Esophagus muscularis mucosa (tissue), 4 donors: ENCODE measurements at regions of chr9 and their contacts with region 1.

Region 1: GRCh38 chr9:114653556-114654159 is 3.9 kb downstream of the TEX53 start:
- DNase-seq: peak; percentile 93
- H3K4me3 ChIP-seq: no peak overlapping the region
- H3K27ac ChIP-seq: peak overlapping the region in 3 of 4 donors; percentile 30 to 46 (median 36)
- H3K4me1 ChIP-seq: peaks cover 0 to 12% (median 10%) of the 10 kb centered on the region in 4 donors
- H3K27me3 ChIP-seq: no peaks in the 10 kb centered on the region
- CTCF ChIP-seq: peak; percentile 87 to 90 (median 89)
- EP300 ChIP-seq: no peak
- POLR2A ChIP-seq: no peak

Region 2: GRCh38 chr9:114348906-114349482 is 304.7 kb before region 1 on chr9:
- intact Hi-C with region 1: loop called (anchors 10 kb)
- DNase-seq: peak; percentile 95
- H3K4me3 ChIP-seq: no peak overlapping the region
- H3K27ac ChIP-seq: peak overlapping the region; percentile 59 to 73 (median 67)
- H3K4me1 ChIP-seq: peaks cover 3 to 41% (median 21%) of the 10 kb centered on the region in 4 donors
- H3K27me3 ChIP-seq: no peaks in the 10 kb centered on the region
- CTCF ChIP-seq: no peak
- EP300 ChIP-seq: no peak
- POLR2A ChIP-seq: no peak

Region 3: DNA sequence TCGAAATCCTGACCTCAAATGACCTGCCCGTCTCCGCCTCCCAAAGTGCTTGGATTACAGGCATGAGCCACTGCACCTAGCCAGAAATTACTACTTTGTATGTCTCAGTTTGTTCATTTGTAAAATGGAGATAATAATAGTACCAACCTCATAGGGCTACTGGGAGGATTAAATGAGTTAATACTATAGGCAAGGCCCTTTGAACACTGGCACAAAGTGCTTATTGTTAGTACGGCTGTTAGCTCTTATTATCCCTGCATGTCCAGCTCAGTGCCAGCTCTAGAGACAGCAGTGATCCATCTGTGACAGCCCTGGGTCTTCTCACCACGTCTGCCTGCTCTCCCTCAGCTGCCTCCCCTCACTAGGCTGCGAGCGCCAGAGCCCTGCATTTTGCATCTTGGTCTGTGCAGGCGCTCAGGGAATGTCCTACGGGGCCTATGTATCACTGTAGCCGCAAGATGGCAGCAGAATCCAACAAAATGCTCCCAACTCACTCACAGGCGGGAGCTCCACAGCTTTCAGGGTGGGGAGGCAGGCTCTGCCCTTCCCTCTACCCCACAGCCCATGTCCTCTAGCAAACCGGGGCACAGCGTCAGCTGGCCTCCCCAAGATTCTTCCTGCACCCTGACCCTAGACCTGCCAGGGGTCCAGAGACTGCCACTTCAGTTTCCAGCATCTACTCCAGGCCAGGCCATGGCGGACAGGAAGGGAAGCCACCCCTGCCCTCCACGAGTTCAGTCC is 248.2 kb before region 1 on chr9:
- intact Hi-C with region 1: loop called (anchors 1 kb)
- DNase-seq: no peak
- H3K4me3 ChIP-seq: no peak overlapping the region
- H3K27ac ChIP-seq: no peak overlapping the region
- H3K4me1 ChIP-seq: peaks cover 0 to 6% (median 0%) of the 10 kb centered on the region in 4 donors
- H3K27me3 ChIP-seq: no peaks in the 10 kb centered on the region
- CTCF ChIP-seq: peak; percentile 70 to 85 (median 74)
- EP300 ChIP-seq: no peak
- POLR2A ChIP-seq: no peak

Region 4: DNA sequence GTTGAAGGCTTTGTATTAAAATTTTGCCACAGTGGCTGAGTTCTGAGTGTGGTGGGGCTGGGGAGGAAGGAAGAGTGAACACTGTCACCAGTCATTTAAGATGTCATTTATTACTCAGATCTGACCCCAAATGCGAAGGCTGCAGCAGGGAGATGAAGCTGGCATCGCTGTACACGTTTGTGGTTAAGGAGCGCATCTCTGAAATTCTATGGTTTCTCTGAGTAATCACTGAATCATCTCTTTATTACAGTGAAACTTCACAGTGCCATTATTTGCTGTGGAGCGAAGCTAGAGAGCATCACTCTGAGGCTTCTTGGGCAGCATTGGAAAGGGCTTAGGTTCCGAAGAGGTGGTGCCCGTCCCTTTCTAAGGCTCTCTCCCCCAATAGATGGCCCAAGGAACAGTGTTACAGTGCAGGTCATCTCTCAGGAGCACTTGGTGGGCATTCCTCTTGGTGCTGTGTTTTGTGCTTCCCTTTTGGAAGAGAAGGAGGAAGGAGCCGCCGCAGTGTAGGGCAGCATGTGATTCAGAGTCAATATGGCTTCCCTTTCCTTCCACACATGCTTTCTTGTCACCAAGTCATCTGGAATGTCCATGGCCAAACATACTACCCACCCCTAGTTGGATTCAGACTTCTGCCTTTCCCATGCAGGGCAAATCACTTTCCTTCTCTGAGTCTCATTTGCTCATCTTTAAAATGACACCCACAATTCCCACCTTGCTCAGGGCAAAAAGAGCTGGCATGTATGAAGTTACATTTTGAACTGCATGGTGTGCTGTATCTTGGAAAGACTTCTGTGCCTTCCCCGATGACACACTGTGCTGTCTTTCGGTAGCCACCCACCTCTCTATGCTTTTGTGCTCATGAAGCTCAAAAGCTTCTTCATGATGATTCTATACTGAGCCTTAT is 37.6 kb after region 1 on chr9:
- intact Hi-C with region 1: no loop called
- DNase-seq: no peak
- H3K4me3 ChIP-seq: no peak overlapping the region
- H3K27ac ChIP-seq: no peak overlapping the region
- H3K4me1 ChIP-seq: no peaks in the 10 kb centered on the region
- H3K27me3 ChIP-seq: no peaks in the 10 kb centered on the region
- CTCF ChIP-seq: no peak
- EP300 ChIP-seq: no peak
- POLR2A ChIP-seq: no peak

Region 5: GRCh38 chr9:114754581-114754980 is 100.9 kb after region 1 on chr9:
- intact Hi-C with region 1: no loop called
- DNase-seq: no peak
- H3K4me3 ChIP-seq: no peak overlapping the region
- H3K27ac ChIP-seq: no peak overlapping the region
- H3K4me1 ChIP-seq: no peaks in the 10 kb centered on the region
- H3K27me3 ChIP-seq: no peaks in the 10 kb centered on the region
- CTCF ChIP-seq: no peak
- EP300 ChIP-seq: no peak
- POLR2A ChIP-seq: no peak